Activated T-helper 2 cell treated with anti-CD3 and anti-CD28 coated beads, Interferon-gamma antibody, Interleukin-2, Interleukin-4, amounts not matched to agents 10 μg/mL and 5 μg/mL and 100 μg/mL, durations not matched to agents 14 hours and 24 hours and 36 hours (primary cell): ENCODE measurements at regions of chr6 and their contacts with region 1.

Region 1: GRCh38 chr6:30515932-30516753 is 26.8 kb downstream of the HLA-E start:
- DNase-seq: peak; percentile 90
- H3K4me3 Mint-ChIP-seq: peak overlapping the region; percentile 75
- H3K27ac Mint-ChIP-seq: peak overlapping the region; percentile 88
- H3K4me1 Mint-ChIP-seq: peaks cover 36% of the 10 kb centered on the region
- H3K27me3 Mint-ChIP-seq: no peaks in the 10 kb centered on the region

Region 2: GRCh38 chr6:30075161-30075986 is 440.8 kb before region 1 on chr6 and contains the start of gene RNF39:
- intact Hi-C with region 1: no loop called
- DNase-seq: no peak
- H3K4me3 Mint-ChIP-seq: peak within 1 kb of the TSS; percentile 30
- H3K27ac Mint-ChIP-seq: no peak within 1 kb of the TSS
- H3K4me1 Mint-ChIP-seq: peaks cover 30% of the 10 kb centered on the region
- H3K27me3 Mint-ChIP-seq: peaks cover 80% of the 10 kb centered on the region
- total RNA-seq, gene RNF39: not detected in 2 replicates

Region 3: DNA sequence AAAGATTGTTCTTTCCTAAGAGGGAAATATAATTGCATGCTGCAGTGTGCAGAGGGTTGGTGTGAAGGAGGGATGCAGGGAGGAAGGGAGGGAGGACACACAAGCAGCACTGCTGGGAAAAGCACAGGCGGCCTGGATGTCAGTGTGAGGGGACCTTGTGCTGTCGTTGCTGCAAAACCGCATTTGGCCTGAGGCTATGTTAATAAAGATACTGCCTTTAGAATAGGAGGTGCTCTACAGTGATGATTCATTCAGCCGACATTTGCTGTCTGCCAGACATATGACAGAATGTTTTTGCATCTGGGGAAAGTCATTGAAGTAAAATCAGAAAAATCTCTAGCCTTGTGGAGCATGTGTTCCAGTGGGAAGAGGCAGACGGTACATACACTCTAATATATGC is 252.4 kb before region 1 on chr6:
- intact Hi-C with region 1: no loop called
- DNase-seq: no peak
- H3K4me3 Mint-ChIP-seq: no peak overlapping the region
- H3K27ac Mint-ChIP-seq: no peak overlapping the region
- H3K4me1 Mint-ChIP-seq: peaks cover 8% of the 10 kb centered on the region
- H3K27me3 Mint-ChIP-seq: peaks cover 4% of the 10 kb centered on the region

Region 4: GRCh38 chr6:30489081-30490025 is 26.8 kb before region 1 on chr6 and contains the start of gene HLA-E:
- intact Hi-C with region 1: loop called (anchors 1 kb)
- DNase-seq: peak; percentile 90
- H3K4me3 Mint-ChIP-seq: peak within 1 kb of the TSS; percentile 98
- H3K27ac Mint-ChIP-seq: peak within 1 kb of the TSS; percentile 97
- H3K4me1 Mint-ChIP-seq: peaks cover 51% of the 10 kb centered on the region
- H3K27me3 Mint-ChIP-seq: no peaks in the 10 kb centered on the region
- total RNA-seq, gene HLA-E: 358 and 360 TPM in 2 replicates

Region 5: DNA sequence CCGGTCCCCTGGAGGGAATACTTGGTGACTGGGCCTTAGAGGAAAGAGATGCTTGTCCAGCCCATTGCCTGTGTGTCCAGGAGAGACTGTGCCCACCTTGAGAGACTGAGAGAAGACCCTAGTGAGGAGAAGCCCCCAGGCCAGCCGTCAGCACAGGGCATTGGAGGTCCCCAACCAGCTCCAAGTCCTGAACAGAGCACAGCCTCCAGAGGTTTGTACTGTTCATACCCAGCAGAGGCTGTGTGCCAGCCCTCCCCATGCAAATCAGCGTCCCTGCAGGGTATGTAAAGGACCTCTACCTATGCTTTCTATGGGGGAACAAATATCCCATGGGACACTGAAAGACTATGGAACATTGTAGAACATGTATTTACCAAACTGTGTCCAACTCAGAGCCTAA is 18.4 kb before region 1 on chr6:
- intact Hi-C with region 1: loop called (anchors 1 kb)
- DNase-seq: no peak
- H3K4me3 Mint-ChIP-seq: no peak overlapping the region
- H3K27ac Mint-ChIP-seq: peak overlapping the region; percentile 2
- H3K4me1 Mint-ChIP-seq: peaks cover 57% of the 10 kb centered on the region
- H3K27me3 Mint-ChIP-seq: no peaks in the 10 kb centered on the region

Region 6: GRCh38 chr6:30752157-30752927 is 236.2 kb after region 1 on chr6:
- intact Hi-C with region 1: no loop called
- DNase-seq: no peak
- H3K4me3 Mint-ChIP-seq: no peak overlapping the region
- H3K27ac Mint-ChIP-seq: no peak overlapping the region
- H3K4me1 Mint-ChIP-seq: peaks cover 20% of the 10 kb centered on the region
- H3K27me3 Mint-ChIP-seq: no peaks in the 10 kb centered on the region